Naive thymus-derived CD4-positive, alpha-beta T cell (primary cell): ENCODE measurements at regions of chr5 and their contacts with region 1.

Region 1: DNA sequence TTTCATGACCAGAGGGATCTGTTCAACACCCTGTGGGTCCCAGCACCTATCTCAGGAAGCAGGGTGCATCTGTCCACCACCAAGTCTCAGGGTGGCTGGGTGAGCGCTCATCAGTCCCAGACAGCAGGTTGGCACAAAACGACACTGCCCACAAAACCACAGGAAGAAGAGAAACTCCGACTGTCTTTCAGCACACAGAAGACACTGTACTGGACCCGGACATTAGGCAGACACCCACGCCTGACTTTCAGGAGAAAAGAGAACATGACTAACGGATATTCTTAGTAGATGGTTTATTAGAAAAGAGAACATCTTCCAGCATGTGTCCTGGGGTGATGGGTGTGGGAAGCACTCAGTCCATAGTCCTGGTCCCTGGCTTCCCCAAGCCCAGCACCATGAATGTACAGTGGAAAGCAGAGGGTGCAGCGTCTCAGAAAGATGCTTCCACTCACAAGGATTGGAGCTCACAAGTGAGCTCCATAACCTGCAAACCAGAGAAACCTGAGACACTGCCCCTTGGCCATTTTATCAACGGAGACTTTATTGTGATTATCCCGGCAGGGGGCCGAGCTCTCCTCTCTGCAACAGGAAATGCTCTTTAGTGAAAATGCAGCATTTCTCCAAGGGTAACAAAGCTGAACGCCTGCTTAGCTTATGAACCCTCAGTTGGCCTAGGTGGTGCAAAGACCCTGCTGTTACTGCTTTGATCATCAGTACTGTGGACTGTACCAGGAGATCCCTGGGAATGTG is 35.8 kb upstream of the LCP2 start:
- DNase-seq: peak in 6 of 9 donors; percentile 36 to 61 (median 50)
- ATAC-seq: peak; percentile 36
- H3K4me3 ChIP-seq: peak overlapping the region; percentile 40
- H3K4me3 Mint-ChIP-seq: peak overlapping the region in 4 of 10 donors; percentile 77 to 82 (median 81)
- H3K27ac ChIP-seq: peak overlapping the region; percentile 87
- H3K27ac Mint-ChIP-seq: no peak overlapping the region
- H3K4me1 ChIP-seq: peaks cover 79 to 87% of the 10 kb centered on the region in 2 donors
- H3K4me1 Mint-ChIP-seq: peaks cover 0 to 65% (median 30%) of the 10 kb centered on the region in 7 donors
- H3K27me3 ChIP-seq: no peaks in the 10 kb centered on the region
- H3K27me3 Mint-ChIP-seq: peaks cover 0 to 3% (median 0%) of the 10 kb centered on the region in 5 donors

Region 2: DNA sequence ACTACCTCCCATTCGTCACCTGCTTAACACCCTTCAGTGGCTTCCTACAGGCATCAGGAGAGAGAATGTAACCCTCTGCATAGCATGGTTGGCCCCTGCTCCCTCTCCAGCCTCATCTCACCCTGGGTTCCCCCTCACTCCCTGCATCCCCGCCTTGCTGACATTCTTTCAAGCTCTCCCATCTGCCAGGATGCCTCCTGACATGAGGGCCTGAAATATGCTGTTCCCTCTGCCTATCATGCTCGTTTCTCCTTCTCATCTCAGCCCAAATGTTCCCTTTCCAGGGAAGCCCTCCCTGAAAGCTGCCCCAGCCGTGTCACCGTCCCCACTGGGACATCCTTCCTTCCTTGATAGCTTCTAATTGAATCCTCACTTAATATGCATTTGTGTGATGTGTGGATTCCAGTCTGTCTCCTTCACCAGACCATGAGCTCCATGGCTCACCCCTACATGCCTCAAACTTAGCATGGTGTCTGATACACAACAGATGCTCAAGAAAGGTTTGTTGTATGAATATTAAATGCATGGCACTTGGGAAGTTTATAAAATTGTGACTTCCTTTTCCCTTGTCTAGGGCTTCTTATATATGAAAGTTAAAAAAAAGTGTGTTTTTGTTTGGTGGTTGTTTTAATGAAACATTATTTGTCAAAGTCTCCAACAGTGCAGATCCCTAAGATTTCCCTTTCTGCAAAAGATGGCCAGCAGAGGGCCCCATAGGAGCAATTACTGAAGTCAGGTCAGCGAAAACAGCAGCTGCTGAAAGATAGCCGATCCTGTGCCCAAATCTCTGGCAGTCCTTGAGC is 107.8 kb before region 1 on chr5:
- CTCF ChIA-PET with region 1: interaction called, 177 read pairs
- POLR2A ChIA-PET with region 1: interaction called, 13 read pairs
- intact Hi-C with region 1: no loop called
- DNase-seq: peak; percentile 45 to 78 (median 69)
- ATAC-seq: peak; percentile 75
- H3K4me3 ChIP-seq: no peak overlapping the region
- H3K4me3 Mint-ChIP-seq: peak overlapping the region in 1 of 10 donors; percentile 15
- H3K27ac ChIP-seq: no peak overlapping the region
- H3K27ac Mint-ChIP-seq: peak overlapping the region in 3 of 9 donors; percentile 31 to 75 (median 61)
- H3K4me1 ChIP-seq: no peaks in the 10 kb centered on the region
- H3K4me1 Mint-ChIP-seq: peaks cover 0 to 11% (median 5%) of the 10 kb centered on the region in 7 donors
- H3K27me3 ChIP-seq: no peaks in the 10 kb centered on the region
- H3K27me3 Mint-ChIP-seq: no peaks in the 10 kb centered on the region

Region 3: GRCh38 chr5:170302653-170303501 is 30.5 kb before region 1 on chr5:
- CTCF ChIA-PET with region 1: interaction called, 120 read pairs
- POLR2A ChIA-PET with region 1: interaction called, 391 read pairs
- intact Hi-C with region 1: loop called (anchors 1 kb)
- DNase-seq: peak; percentile 44 to 92 (median 84)
- ATAC-seq: peak; percentile 86
- H3K4me3 ChIP-seq: peak overlapping the region; percentile 54
- H3K4me3 Mint-ChIP-seq: peak overlapping the region; percentile 85 to 99 (median 92)
- H3K27ac ChIP-seq: peak overlapping the region; percentile 79
- H3K27ac Mint-ChIP-seq: peak overlapping the region; percentile 74 to 99 (median 96)
- H3K4me1 ChIP-seq: peaks cover 56 to 61% of the 10 kb centered on the region in 2 donors
- H3K4me1 Mint-ChIP-seq: peaks cover 56 to 98% (median 87%) of the 10 kb centered on the region in 7 donors
- H3K27me3 ChIP-seq: no peaks in the 10 kb centered on the region
- H3K27me3 Mint-ChIP-seq: no peaks in the 10 kb centered on the region

Region 4: DNA sequence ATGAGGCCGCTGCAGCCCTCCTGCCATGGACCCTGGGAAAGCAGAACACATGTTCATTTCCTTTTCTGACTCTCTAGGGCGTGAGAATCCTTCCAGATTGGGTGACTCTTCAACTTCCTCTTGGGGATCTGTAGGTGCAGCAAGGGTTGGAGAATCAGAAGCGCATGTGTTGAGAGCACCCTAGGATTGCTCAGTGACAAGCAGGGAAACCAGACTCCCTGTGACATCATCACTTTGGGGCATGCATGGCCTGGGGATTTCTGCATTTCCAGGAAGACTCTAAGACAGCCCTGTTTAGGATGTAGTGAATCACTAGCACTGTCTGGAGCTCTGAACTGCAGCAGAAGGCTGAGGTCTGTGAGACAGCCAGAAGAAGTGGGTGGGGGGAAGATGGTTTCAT is 20.7 kb before region 1 on chr5:
- CTCF ChIA-PET with region 1: interaction called, 13 read pairs
- POLR2A ChIA-PET with region 1: interaction called, 51 read pairs
- intact Hi-C with region 1: loop called (anchors 1 kb)
- DNase-seq: peak in 4 of 9 donors; percentile 27 to 85 (median 48)
- ATAC-seq: peak; percentile 87
- H3K4me3 ChIP-seq: peak overlapping the region; percentile 39
- H3K4me3 Mint-ChIP-seq: peak overlapping the region; percentile 66 to 83 (median 75)
- H3K27ac ChIP-seq: peak overlapping the region; percentile 69
- H3K27ac Mint-ChIP-seq: peak overlapping the region; percentile 58 to 97 (median 95)
- H3K4me1 ChIP-seq: peaks cover 29 to 50% of the 10 kb centered on the region in 2 donors
- H3K4me1 Mint-ChIP-seq: peaks cover 38 to 85% (median 70%) of the 10 kb centered on the region in 7 donors
- H3K27me3 ChIP-seq: no peaks in the 10 kb centered on the region
- H3K27me3 Mint-ChIP-seq: no peaks in the 10 kb centered on the region

Region 5: GRCh38 chr5:170504031-170504596 is 170.8 kb after region 1 on chr5:
- CTCF ChIA-PET with region 1: no interaction called
- POLR2A ChIA-PET with region 1: no interaction called
- intact Hi-C with region 1: no loop called
- DNase-seq: no peak
- ATAC-seq: peak; percentile 24
- H3K4me3 ChIP-seq: no peak overlapping the region
- H3K4me3 Mint-ChIP-seq: peak overlapping the region in 1 of 10 donors; percentile 20
- H3K27ac ChIP-seq: no peak overlapping the region
- H3K27ac Mint-ChIP-seq: no peak overlapping the region
- H3K4me1 ChIP-seq: no peaks in the 10 kb centered on the region
- H3K4me1 Mint-ChIP-seq: peaks cover 0 to 6% (median 0%) of the 10 kb centered on the region in 7 donors
- H3K27me3 ChIP-seq: peaks cover 0 to 3% of the 10 kb centered on the region in 2 donors
- H3K27me3 Mint-ChIP-seq: peaks cover 47 to 55% (median 48%) of the 10 kb centered on the region in 5 donors